ENCODE measurements at regions of chr21 and their contacts with region 1.

Region 1: DNA sequence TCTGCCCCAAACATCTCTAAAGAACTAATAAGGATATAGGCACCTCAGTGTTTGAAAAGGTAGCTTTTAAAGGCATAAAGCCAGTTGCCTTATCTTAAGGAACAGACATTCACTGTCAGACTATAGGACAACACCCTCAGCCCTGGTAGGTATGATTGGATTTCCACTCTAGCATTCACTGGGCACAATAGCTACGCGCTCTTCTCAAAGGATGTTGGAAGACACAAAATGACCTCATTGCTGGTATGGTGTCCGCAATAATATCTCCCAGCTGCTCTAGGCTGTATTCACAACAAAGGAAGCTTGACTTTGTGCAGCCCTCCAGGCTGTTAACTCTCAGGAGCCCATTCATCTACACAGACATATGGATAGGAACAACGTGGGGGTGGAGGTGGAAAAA is 119.4 kb upstream of the CXADR start:
- DNase-seq: no peak
- H3K4me3 ChIP-seq: no peak overlapping the region
- H3K27ac ChIP-seq: no peak overlapping the region
- H3K4me1 ChIP-seq: no peaks in the 10 kb centered on the region
- H3K27me3 ChIP-seq: no peaks in the 10 kb centered on the region
- CTCF ChIP-seq: no peak
- POLR2A ChIP-seq: no peak

Region 2: GRCh38 chr21:15592271-15592860 is 1801.0 kb before region 1 on chr21:
- intact Hi-C with region 1: no loop called
- DNase-seq: peak in 1 of 7 donors; percentile 16
- H3K4me3 ChIP-seq: no peak overlapping the region
- H3K27ac ChIP-seq: no peak overlapping the region
- H3K4me1 ChIP-seq: no peaks in the 10 kb centered on the region
- H3K27me3 ChIP-seq: no peaks in the 10 kb centered on the region
- CTCF ChIP-seq: peak; percentile 39 to 77 (median 67)
- POLR2A ChIP-seq: no peak

Region 3: DNA sequence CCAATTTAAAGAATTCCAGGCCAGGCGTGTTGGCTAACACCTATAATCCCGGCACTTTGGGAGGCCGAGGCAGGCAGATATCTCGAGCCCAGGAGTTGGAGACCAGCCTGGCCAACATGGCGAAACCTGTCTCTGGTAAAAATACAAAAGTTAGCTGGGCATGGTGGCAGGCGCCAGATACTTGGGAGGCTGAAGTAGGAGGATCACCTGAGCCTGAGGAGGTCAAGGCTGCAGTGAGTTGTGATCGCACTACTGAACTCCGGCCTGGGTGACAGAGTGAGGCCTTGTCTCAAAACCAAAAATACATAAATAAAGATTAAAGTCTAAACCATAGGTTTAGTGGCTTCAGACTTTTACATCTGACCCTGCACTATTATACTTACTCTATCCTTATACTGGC is 186.9 kb after region 1 on chr21:
- intact Hi-C with region 1: loop called in 1 of 2 experiments (anchors 5 kb)
- DNase-seq: no peak
- H3K4me3 ChIP-seq: no peak overlapping the region
- H3K27ac ChIP-seq: no peak overlapping the region
- H3K4me1 ChIP-seq: peaks cover 0 to 7% of the 10 kb centered on the region in 2 donors
- H3K27me3 ChIP-seq: no peaks in the 10 kb centered on the region
- CTCF ChIP-seq: no peak
- POLR2A ChIP-seq: no peak

Measured in adrenal gland (tissue), 19 donors.